ENCODE measurements at regions of chr12 and their contacts with region 1.

Region 1: GRCh38 chr12:115354007-115354452 is 670.1 kb upstream of the TBX3 start:
- DNase-seq: peak; percentile 58 to 91
- H3K4me3 ChIP-seq: peak overlapping the region; percentile 41 to 54
- H3K27ac ChIP-seq: peak overlapping the region; percentile 59 to 84
- H3K4me1 ChIP-seq: no peaks in the 10 kb centered on the region
- H3K27me3 ChIP-seq: no peaks in the 10 kb centered on the region
- CTCF ChIP-seq: no peak

Region 2: GRCh38 chr12:114684098-114684869 is 669.7 kb before region 1 on chr12 and contains the start of gene TBX3:
- intact Hi-C with region 1: loop called (anchors 10 kb)
- DNase-seq: peak; percentile 73 to 95
- H3K4me3 ChIP-seq: peak within 1 kb of the TSS; percentile 75 to 79
- H3K27ac ChIP-seq: peak within 1 kb of the TSS; percentile 80 to 91
- H3K4me1 ChIP-seq: peaks cover 7 to 9% of the 10 kb centered on the region in 2 donors
- H3K27me3 ChIP-seq: peaks cover 9% of the 10 kb centered on the region
- CTCF ChIP-seq: peak in 2 of 3 experiments; percentile 42
- total RNA-seq, gene TBX3: 20.0 TPM

Region 3: DNA sequence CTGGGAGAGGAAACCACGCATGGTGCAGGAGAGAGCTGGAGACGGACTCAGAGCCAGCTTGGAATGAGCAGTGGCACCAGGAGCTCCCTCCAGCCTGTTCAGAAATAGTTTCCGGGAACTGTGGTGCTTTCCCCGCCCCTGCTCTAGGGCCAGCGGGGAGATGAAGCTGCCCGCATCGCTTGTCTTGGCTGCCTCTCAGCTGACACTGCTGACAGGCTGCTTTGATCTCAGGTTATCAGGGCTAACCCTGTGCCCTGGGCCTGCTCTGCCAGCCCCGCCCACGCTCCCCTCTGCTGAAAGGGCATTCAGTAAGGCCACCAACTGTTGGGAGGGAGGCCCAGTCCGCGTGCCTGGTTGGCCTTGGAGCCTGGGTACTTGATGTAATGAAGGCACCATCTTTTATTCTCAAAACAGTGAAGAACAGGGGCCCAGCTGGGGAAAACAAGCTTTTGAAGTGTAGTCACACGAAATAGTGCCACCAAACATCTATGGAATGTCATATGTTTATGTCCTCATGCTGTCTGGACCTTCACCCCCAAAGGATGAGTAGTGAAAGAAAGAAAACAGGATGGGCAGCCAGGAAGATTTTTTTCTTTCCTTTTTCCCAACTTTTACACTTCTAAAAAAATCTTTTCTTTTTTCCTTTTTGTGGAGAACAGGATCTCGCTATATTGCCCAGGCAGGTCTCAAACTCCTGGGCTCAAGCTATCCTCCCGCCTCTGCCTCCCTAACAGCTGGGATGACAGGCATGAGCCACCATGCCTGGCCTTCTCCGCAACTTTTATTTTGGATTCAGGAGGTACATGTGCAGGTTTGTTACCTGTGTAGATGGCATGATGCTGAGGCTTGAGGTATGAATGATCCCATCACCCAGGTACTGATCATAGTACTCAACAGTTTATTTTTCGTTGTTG is 554.2 kb before region 1 on chr12:
- intact Hi-C with region 1: no loop called
- DNase-seq: no peak
- H3K4me3 ChIP-seq: no peak overlapping the region
- H3K27ac ChIP-seq: no peak overlapping the region
- H3K4me1 ChIP-seq: no peaks in the 10 kb centered on the region
- H3K27me3 ChIP-seq: no peaks in the 10 kb centered on the region
- CTCF ChIP-seq: no peak

Region 4: GRCh38 chr12:115375186-115375991 is 21.4 kb after region 1 on chr12:
- intact Hi-C with region 1: no loop called
- DNase-seq: no peak
- H3K4me3 ChIP-seq: no peak overlapping the region
- H3K27ac ChIP-seq: no peak overlapping the region
- H3K4me1 ChIP-seq: no peaks in the 10 kb centered on the region
- H3K27me3 ChIP-seq: no peaks in the 10 kb centered on the region
- CTCF ChIP-seq: no peak

Region 5: GRCh38 chr12:115404761-115405470 is 50.9 kb after region 1 on chr12:
- intact Hi-C with region 1: loop called (anchors 5 kb)
- DNase-seq: no peak
- H3K4me3 ChIP-seq: peak overlapping the region; percentile 21 to 35
- H3K27ac ChIP-seq: peak overlapping the region; percentile 47 to 66
- H3K4me1 ChIP-seq: peaks cover 0 to 4% of the 10 kb centered on the region in 2 donors
- H3K27me3 ChIP-seq: no peaks in the 10 kb centered on the region
- CTCF ChIP-seq: no peak

Region 6: DNA sequence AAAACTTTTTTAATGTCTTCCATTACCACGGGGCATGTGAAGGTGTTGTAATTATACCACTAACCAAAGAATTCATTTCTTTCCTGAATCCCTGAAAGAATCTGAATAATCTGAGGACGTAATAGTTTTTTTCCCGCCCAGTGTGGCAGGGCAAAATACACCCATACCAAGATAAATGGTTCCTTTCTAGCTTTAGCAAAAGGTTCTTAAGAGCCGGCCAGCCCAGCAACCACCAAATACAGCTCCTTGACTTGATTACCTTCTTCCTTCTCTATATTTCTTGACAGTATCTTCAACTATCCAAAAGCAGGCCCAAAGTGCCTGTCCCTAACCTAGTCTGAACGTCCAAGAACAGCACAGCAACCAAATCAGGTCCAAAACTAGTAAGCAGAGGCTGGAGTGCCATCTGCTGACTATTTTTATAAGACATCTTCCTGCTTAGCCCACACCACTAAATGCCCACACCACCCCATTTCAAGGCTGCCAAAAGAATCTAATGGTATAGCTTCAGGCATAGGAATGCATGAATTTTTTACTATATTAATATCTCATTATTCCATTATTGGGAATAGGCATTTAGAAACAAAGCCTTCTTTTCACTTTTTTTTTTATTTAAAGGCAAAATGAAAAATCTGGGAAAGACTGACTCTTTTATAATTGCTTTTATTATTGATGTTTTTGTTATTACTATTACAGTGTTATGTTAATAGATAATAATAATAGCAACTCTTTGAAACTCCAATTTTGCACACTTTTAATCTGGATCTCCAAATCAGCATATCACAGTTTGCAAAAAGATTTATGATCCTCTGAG is 399.1 kb after region 1 on chr12:
- intact Hi-C with region 1: loop called (anchors 5 kb)
- DNase-seq: no peak
- H3K4me3 ChIP-seq: no peak overlapping the region
- H3K27ac ChIP-seq: no peak overlapping the region
- H3K4me1 ChIP-seq: no peaks in the 10 kb centered on the region
- H3K27me3 ChIP-seq: no peaks in the 10 kb centered on the region
- CTCF ChIP-seq: peak; percentile 51 to 79 (median 54)

Region 7: DNA sequence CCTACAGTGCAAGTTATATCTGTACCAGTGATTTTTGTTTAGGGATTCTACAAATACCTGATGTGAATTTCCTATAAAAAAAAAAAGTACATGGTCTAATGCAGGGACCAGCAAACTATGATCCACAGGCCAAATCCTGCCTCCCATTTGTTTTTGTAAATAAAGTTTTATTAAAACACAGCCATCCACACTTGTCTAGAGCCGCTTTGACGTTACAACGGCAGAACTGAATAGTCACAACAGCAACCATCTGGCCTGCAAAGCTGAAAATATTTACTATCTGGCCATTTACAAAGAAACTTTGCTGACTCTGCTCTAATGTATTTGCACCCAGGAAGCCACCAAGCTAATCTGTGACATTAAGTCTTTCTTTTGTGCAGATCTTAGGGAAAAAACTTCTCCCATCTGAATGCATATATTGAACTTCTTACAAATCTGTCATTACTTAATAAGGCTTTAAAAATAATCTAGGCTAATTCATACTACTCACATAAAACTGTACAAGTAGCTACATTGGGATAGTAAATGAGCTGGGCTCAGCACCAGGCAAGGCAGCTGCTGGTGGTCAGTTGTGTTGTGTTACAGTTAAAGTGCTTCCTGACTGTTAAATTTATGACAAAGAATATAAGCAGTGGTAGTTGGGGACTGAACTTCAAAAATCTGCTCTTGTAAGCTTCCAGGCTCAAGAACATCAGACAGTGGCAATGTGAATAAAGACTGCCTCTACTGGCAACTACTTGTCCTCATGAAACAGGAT is 620.1 kb after region 1 on chr12:
- intact Hi-C with region 1: no loop called
- DNase-seq: no peak
- H3K4me3 ChIP-seq: no peak overlapping the region
- H3K27ac ChIP-seq: no peak overlapping the region
- H3K4me1 ChIP-seq: peaks cover 0 to 4% of the 10 kb centered on the region in 2 donors
- H3K27me3 ChIP-seq: no peaks in the 10 kb centered on the region
- CTCF ChIP-seq: no peak

Measured in ascending aorta (tissue), 2 donors.